ENCODE measurements at regions of chr2 and their contacts with region 1.

Region 1: GRCh38 chr2:119641562-119642258 is 37.3 kb upstream of the TMEM177 start:
- DNase-seq: peak; percentile 27 to 83 (median 63)
- ATAC-seq: peak; percentile 78 to 94 (median 88)
- H3K4me3 ChIP-seq: no peak overlapping the region
- H3K4me3 Mint-ChIP-seq: no peak overlapping the region
- H3K27ac ChIP-seq: no peak overlapping the region
- H3K27ac Mint-ChIP-seq: no peak overlapping the region
- H3K4me1 ChIP-seq: peaks cover 0 to 2% of the 10 kb centered on the region in 2 experiments
- H3K4me1 Mint-ChIP-seq: peaks cover 0 to 4% (median 4%) of the 10 kb centered on the region in 3 donors
- H3K27me3 ChIP-seq: peaks cover 0 to 3% of the 10 kb centered on the region in 2 experiments
- H3K27me3 Mint-ChIP-seq: peaks cover 11 to 14% of the 10 kb centered on the region in 2 donors

Region 2: DNA sequence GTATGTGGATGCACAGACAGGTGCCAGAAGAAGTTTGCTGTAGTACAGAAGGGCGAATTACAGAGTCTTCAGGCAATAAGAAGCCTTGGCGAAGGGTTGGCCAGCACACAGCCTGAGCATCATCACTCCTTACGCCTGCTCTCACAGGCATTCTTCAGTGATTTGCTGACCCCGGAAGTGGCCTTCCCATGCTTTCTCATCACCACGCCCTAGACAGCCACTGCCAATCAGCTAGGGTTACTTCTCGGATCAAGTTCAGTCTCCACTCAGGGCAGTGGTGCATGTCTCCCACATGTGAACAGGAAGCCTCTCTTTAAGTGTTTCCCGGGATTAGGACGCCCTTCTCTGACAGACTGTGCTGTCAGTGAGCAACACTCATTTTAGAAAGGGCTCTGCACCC is 565.0 kb before region 1 on chr2:
- CTCF ChIA-PET with region 1: no interaction called
- POLR2A ChIA-PET with region 1: no interaction called
- DNase-seq: no peak
- ATAC-seq: no peak
- H3K4me3 ChIP-seq: no peak overlapping the region
- H3K4me3 Mint-ChIP-seq: no peak overlapping the region
- H3K27ac ChIP-seq: no peak overlapping the region
- H3K27ac Mint-ChIP-seq: no peak overlapping the region
- H3K4me1 ChIP-seq: no peaks in the 10 kb centered on the region
- H3K4me1 Mint-ChIP-seq: no peaks in the 10 kb centered on the region
- H3K27me3 ChIP-seq: peaks cover 0 to 24% of the 10 kb centered on the region in 2 experiments
- H3K27me3 Mint-ChIP-seq: peaks cover 8 to 20% of the 10 kb centered on the region in 2 donors

Region 3: DNA sequence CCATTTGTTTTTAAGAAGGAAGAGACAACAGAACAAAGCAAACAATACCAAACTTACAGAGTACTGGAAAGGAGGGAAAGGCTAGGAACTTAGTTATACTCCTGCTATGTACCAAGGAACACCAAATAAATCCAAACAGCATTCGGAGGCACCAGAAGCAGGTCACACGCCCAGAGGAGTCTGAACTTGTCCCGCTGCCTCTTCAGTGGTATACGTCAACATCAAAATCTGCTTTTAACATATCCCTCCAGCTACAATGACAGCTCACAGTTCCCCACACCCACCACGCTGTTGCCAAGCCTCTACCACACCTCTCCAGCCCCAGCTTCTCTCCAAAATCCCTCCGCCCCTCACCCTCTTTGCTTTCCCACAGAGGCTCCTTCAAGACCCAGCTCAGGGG is 292.4 kb before region 1 on chr2:
- CTCF ChIA-PET with region 1: interaction called in 1 of 2 experiments, 11 read pairs
- POLR2A ChIA-PET with region 1: no interaction called
- DNase-seq: no peak
- ATAC-seq: no peak
- H3K4me3 ChIP-seq: no peak overlapping the region
- H3K4me3 Mint-ChIP-seq: no peak overlapping the region
- H3K27ac ChIP-seq: no peak overlapping the region
- H3K27ac Mint-ChIP-seq: no peak overlapping the region
- H3K4me1 ChIP-seq: no peaks in the 10 kb centered on the region
- H3K4me1 Mint-ChIP-seq: no peaks in the 10 kb centered on the region
- H3K27me3 ChIP-seq: no peaks in the 10 kb centered on the region
- H3K27me3 Mint-ChIP-seq: no peaks in the 10 kb centered on the region

Region 4: GRCh38 chr2:120312861-120313694 is 671.4 kb after region 1 on chr2:
- CTCF ChIA-PET with region 1: interaction called in 1 of 2 experiments, 12 read pairs
- POLR2A ChIA-PET with region 1: no interaction called
- DNase-seq: peak; percentile 30 to 79 (median 60)
- ATAC-seq: peak; percentile 74 to 83 (median 78)
- H3K4me3 ChIP-seq: peak overlapping the region; percentile 40 to 69
- H3K4me3 Mint-ChIP-seq: peak overlapping the region; percentile 71 to 76 (median 72)
- H3K27ac ChIP-seq: no peak overlapping the region
- H3K27ac Mint-ChIP-seq: peak overlapping the region in 1 of 2 donors; percentile 72
- H3K4me1 ChIP-seq: peaks cover 11 to 29% of the 10 kb centered on the region in 2 experiments
- H3K4me1 Mint-ChIP-seq: peaks cover 25 to 30% (median 29%) of the 10 kb centered on the region in 3 donors
- H3K27me3 ChIP-seq: peaks cover 0 to 30% of the 10 kb centered on the region in 2 experiments
- H3K27me3 Mint-ChIP-seq: no peaks in the 10 kb centered on the region

Measured in T-cell (primary cell).